ENCODE measurements at regions of chr5 and their contacts with region 1.

Region 1: GRCh38 chr5:2751592-2752021 is at the start of gene IRX2:
- DNase-seq: peak in 3 of 4 donors; percentile 88 to 94 (median 92)
- ATAC-seq: peak; percentile 68
- H3K4me3 ChIP-seq: peak within 1 kb of the TSS; percentile 37 to 42
- H3K27ac ChIP-seq: peak within 1 kb of the TSS; percentile 76 to 88
- H3K4me1 ChIP-seq: peaks cover 0 to 10% of the 10 kb centered on the region in 2 donors
- H3K27me3 ChIP-seq: peaks cover 89 to 99% of the 10 kb centered on the region in 2 donors
- CTCF ChIP-seq: no peak
- polyA plus RNA-seq, gene IRX2: 53.1 to 72.0 (median 66.3) TPM

Region 2: GRCh38 chr5:2482778-2483177 is 268.8 kb before region 1 on chr5:
- intact Hi-C with region 1: no loop called
- DNase-seq: no peak
- ATAC-seq: no peak
- H3K4me3 ChIP-seq: no peak overlapping the region
- H3K27ac ChIP-seq: no peak overlapping the region
- H3K4me1 ChIP-seq: no peaks in the 10 kb centered on the region
- H3K27me3 ChIP-seq: no peaks in the 10 kb centered on the region
- CTCF ChIP-seq: no peak

Region 3: DNA sequence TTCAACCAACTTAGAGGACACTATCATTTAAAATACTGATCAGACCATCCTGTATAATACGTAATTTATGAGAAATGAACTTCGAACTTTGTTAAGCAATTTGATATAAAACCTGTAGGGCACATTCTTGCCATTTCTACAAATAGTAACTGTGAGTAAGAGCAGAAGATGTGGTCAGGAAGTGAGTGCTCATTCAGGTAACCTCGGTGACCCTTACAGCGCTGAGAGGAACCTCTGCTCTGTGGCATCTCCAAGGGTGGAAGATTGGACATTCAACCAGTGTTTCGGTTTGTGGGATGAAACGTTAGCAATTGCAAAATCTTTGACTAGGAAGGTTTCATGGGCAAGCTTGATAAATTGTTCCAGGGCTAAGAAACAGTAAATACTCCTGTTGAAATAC is 194.7 kb after region 1 on chr5:
- intact Hi-C with region 1: no loop called
- DNase-seq: no peak
- ATAC-seq: no peak
- H3K4me3 ChIP-seq: no peak overlapping the region
- H3K27ac ChIP-seq: no peak overlapping the region
- H3K4me1 ChIP-seq: no peaks in the 10 kb centered on the region
- H3K27me3 ChIP-seq: no peaks in the 10 kb centered on the region
- CTCF ChIP-seq: no peak

Region 4: GRCh38 chr5:3595006-3595961 is 843.7 kb after region 1 on chr5 and contains the start of gene IRX1:
- intact Hi-C with region 1: loop called in 1 of 2 experiments (anchors 5 kb)
- DNase-seq: peak in 3 of 4 donors; percentile 56 to 82 (median 65)
- ATAC-seq: peak; percentile 68
- H3K4me3 ChIP-seq: peak within 1 kb of the TSS; percentile 29 to 36
- H3K27ac ChIP-seq: peak within 1 kb of the TSS; percentile 42 to 56
- H3K4me1 ChIP-seq: peaks cover 0 to 14% of the 10 kb centered on the region in 2 donors
- H3K27me3 ChIP-seq: peaks cover 86 to 100% of the 10 kb centered on the region in 2 donors
- CTCF ChIP-seq: no peak
- polyA plus RNA-seq, gene IRX1: 26.3 to 41.2 (median 37.0) TPM

Measured in left lung (tissue), 14 donors.